Activated CD8-positive, alpha-beta T cell treated with anti-CD3 and anti-CD28 coated beads, Interleukin-2, amount 10 ng/mL, durations not matched to agents 7 days and 5 days (primary cell): ENCODE measurements at regions of chr6 and their contacts with region 1.

Region 1: GRCh38 chr6:127302728-127303660 is 36.3 kb downstream of the RNF146 start:
- DNase-seq: peak; percentile 59
- ATAC-seq: no peak
- H3K4me3 Mint-ChIP-seq: no peak overlapping the region
- H3K27ac Mint-ChIP-seq: no peak overlapping the region
- H3K4me1 Mint-ChIP-seq: peaks cover 5% of the 10 kb centered on the region
- H3K27me3 Mint-ChIP-seq: no peaks in the 10 kb centered on the region

Region 2: GRCh38 chr6:127291495-127291894 is 11.5 kb before region 1 on chr6:
- CTCF ChIA-PET with region 1: interaction called, 24 read pairs
- POLR2A ChIA-PET with region 1: no interaction called
- DNase-seq: no peak
- ATAC-seq: no peak
- H3K4me3 Mint-ChIP-seq: peak overlapping the region; percentile 25
- H3K27ac Mint-ChIP-seq: no peak overlapping the region
- H3K4me1 Mint-ChIP-seq: peaks cover 13% of the 10 kb centered on the region
- H3K27me3 Mint-ChIP-seq: no peaks in the 10 kb centered on the region

Region 3: DNA sequence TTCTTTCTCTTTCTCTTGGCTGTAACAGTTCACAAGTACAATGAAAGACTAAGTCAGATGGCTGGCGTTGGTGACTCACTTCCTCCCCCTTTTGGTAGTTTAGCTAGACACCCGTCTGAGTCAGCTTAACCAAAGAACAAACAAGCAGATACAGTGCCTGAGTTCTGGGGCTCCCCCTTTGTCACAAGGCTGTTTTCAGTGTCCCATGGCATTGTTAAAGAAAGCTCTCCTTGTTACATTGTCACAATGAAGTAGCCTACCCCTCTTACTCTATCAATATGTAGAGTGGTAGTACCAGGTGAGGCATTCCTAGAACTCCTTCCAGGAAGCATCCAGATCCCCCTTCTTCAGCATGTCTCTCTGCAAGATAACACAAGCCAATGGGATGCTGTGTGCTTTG is 117.6 kb after region 1 on chr6:
- CTCF ChIA-PET with region 1: interaction called, 15 read pairs
- POLR2A ChIA-PET with region 1: no interaction called
- DNase-seq: peak; percentile 82
- ATAC-seq: peak; percentile 100
- H3K4me3 Mint-ChIP-seq: no peak overlapping the region
- H3K27ac Mint-ChIP-seq: peak overlapping the region; percentile 6
- H3K4me1 Mint-ChIP-seq: peaks cover 6% of the 10 kb centered on the region
- H3K27me3 Mint-ChIP-seq: no peaks in the 10 kb centered on the region

Region 4: GRCh38 chr6:127539272-127539671 is 236.3 kb after region 1 on chr6:
- CTCF ChIA-PET with region 1: interaction called, 15 read pairs
- POLR2A ChIA-PET with region 1: no interaction called
- DNase-seq: no peak
- ATAC-seq: peak; percentile 60
- H3K4me3 Mint-ChIP-seq: no peak overlapping the region
- H3K27ac Mint-ChIP-seq: no peak overlapping the region
- H3K4me1 Mint-ChIP-seq: peaks cover 3% of the 10 kb centered on the region
- H3K27me3 Mint-ChIP-seq: peaks cover 20% of the 10 kb centered on the region